Endothelial cell of umbilical vein (primary cell): ENCODE measurements at regions of chr2 and their contacts with region 1.

Region 1: DNA sequence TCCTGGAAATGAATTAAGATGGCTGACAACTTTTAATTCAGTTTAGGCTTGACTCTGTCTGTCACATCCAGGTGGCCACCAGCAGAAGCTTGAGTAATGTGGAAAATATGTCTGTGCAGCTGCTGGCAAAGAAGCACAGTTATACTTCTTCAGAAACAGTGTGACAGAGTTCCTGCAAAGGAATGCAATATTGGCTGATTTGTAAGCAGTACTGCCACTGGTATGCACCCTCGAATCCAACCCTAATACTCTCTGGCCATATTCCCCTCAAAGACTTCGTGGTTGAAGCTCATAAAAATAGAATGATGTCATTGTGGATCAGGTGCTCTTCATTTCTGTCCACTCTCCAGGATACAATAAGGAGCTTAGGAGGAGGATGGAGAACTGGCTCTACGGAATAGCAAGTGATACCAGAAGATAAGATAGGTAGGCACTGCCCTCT is 86.2 kb downstream of the METTL8 start:
- DNase-seq: peak; percentile 59
- H3K4me3 ChIP-seq: no peak overlapping the region
- H3K27ac ChIP-seq: no peak overlapping the region
- H3K4me1 ChIP-seq: peaks cover 16% of the 10 kb centered on the region
- H3K27me3 ChIP-seq: no peaks in the 10 kb centered on the region
- CTCF ChIP-seq: no peak
- POLR2A ChIP-seq: no peak

Region 2: GRCh38 chr2:171407030-171407675 is 59.5 kb after region 1 on chr2:
- CTCF ChIA-PET with region 1: no interaction called
- POLR2A ChIA-PET with region 1: no interaction called
- dilution Hi-C with region 1: no loop called
- intact Hi-C with region 1: loop called (anchors 5 kb)
- DNase-seq: no peak
- H3K4me3 ChIP-seq: no peak overlapping the region
- H3K27ac ChIP-seq: no peak overlapping the region
- H3K4me1 ChIP-seq: peaks cover 53% of the 10 kb centered on the region
- H3K27me3 ChIP-seq: no peaks in the 10 kb centered on the region
- CTCF ChIP-seq: no peak
- POLR2A ChIP-seq: no peak

Region 3: DNA sequence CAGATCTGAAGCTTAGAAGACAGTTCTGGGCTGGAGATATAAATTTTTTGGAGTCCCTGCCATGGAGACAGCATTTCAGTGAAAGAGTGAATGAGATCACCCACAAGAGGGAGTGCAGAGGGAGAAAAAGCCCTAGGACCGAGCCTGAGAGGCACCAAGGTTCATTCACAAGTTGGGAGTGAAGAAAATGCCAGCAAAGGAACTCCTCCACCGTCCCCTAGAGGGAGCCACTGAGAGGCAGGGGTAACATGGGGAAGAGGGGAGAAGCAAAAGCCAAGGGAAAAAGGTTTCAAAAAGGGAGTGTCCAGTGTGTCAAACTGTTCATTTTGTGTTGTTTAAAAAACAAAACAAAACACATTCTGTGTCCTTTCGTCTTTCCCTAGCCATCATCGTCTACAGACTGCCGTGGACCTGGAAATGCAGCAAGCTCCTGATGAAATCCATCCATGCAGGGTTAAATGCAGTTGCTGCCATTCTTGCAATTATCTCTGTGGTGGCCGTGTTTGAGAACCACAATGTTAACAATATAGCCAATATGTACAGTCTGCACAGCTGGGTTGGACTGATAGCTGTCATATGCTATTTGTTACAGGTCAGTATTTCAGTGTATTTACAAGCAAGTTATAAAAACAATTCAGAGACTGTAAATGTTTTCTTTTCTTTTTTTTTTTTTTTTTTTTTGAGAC is 193.7 kb after region 1 on chr2:
- CTCF ChIA-PET with region 1: no interaction called
- POLR2A ChIA-PET with region 1: no interaction called
- dilution Hi-C with region 1: no loop called
- intact Hi-C with region 1: no loop called
- DNase-seq: no peak
- H3K4me3 ChIP-seq: no peak overlapping the region
- H3K27ac ChIP-seq: no peak overlapping the region
- H3K4me1 ChIP-seq: peaks cover 5% of the 10 kb centered on the region
- H3K27me3 ChIP-seq: no peaks in the 10 kb centered on the region
- CTCF ChIP-seq: peak; percentile 19 to 21
- POLR2A ChIP-seq: no peak